ENCODE measurements at regions of chr1 and their contacts with region 1.

Region 1: DNA sequence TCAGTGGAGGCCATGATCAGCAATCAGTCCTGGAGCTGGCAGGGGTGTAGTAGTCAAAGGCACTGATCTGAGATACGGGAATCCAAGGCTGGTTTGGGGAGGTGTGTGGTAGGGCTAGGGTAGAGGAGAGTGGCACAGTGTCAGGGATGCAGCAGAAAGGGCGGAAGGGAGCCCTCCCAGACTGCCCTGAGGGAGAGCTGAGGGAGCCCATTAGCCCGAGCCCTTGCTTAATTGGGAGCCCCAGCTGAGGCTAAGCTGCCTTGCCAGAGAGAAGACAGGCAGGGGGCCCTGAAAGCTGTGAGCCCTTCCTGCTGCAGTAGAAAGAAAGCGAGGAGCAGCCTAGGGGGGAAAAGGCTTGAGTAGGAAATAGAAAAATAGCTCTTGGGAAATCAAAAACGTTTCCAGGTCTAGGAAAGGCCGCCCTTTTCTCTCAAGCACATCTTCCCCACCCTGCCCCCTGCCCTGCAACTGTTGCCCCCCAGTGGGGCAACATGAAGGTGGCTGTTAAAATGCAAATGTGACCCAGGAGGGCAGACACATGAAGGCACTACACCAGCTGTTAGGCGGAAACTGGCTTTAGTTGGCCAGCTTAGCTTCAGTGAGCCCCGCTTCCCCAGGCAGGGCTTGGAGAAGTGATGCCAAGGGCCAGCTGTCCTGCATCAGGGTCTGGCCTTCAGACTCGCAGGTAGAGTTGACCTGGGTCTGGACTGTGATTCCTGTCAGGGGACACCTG is 106.2 kb downstream of the UCK2 start:
- DNase-seq: no peak
- ATAC-seq: no peak
- H3K4me3 ChIP-seq: no peak overlapping the region
- H3K27ac ChIP-seq: no peak overlapping the region
- H3K4me1 ChIP-seq: no peaks in the 10 kb centered on the region
- H3K27me3 ChIP-seq: peaks cover 0 to under 1% (median 0%) of the 10 kb centered on the region in 9 donors
- CTCF ChIP-seq: no peak
- POLR2A ChIP-seq: no peak

Region 2: GRCh38 chr1:166184897-166185296 is 251.3 kb after region 1 on chr1:
- intact Hi-C with region 1: loop called in 1 of 10 experiments (anchors 10 kb)
- DNase-seq: no peak
- ATAC-seq: no peak
- H3K4me3 ChIP-seq: no peak overlapping the region
- H3K27ac ChIP-seq: no peak overlapping the region
- H3K4me1 ChIP-seq: no peaks in the 10 kb centered on the region
- H3K27me3 ChIP-seq: peaks cover 0 to 4% (median 0%) of the 10 kb centered on the region in 9 donors
- CTCF ChIP-seq: no peak
- POLR2A ChIP-seq: no peak

Region 3: GRCh38 chr1:166418344-166418933 is 484.8 kb after region 1 on chr1:
- intact Hi-C with region 1: loop called in 1 of 10 experiments (anchors 5 kb)
- DNase-seq: no peak
- ATAC-seq: no peak
- H3K4me3 ChIP-seq: no peak overlapping the region
- H3K27ac ChIP-seq: no peak overlapping the region
- H3K4me1 ChIP-seq: no peaks in the 10 kb centered on the region
- H3K27me3 ChIP-seq: no peaks in the 10 kb centered on the region
- CTCF ChIP-seq: no peak
- POLR2A ChIP-seq: no peak

Measured in heart left ventricle (tissue), 16 donors.